ENCODE measurements at regions of chrX and their contacts with region 1.

Region 1: DNA sequence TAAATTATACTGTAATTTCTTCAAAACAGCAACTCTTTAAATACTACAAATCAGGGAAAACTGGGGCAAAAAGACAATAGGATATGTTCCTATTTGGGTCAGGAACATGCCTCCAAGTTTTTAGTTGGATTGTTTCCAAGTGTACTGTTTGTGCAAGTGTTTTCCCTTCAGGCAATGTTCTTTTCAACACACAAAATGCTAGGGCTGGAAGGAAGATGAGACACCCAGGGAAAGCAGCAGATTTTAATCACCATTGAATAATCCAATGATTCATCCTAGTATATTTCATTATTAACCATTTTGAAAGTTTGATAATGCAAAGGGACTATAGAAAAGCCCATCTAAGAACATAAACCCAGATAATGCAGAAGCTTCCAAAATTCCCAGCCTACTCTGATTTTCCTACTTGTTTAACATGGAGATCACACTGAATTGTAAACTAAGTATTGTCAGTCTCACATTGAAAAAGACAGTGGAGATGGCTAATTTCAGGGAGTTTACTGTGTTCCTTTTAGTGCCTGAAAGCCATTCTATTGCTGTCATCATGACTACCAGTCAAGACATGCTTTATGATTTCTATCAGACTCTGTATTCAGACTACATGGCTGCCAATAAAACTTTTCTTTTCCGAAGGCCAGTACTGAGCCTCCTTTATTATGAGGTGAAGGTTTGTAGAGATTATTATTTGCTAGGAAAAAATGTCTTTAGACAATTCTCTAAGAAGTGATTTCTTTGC is 38.6 kb downstream of the COL4A6 start:
- DNase-seq: no peak
- ATAC-seq: no peak
- H3K4me3 ChIP-seq: no peak overlapping the region
- H3K27ac ChIP-seq: no peak overlapping the region
- H3K4me1 ChIP-seq: peaks cover 0 to 10% (median 0%) of the 10 kb centered on the region in 12 donors
- H3K27me3 ChIP-seq: peaks cover 0 to 7% (median 0%) of the 10 kb centered on the region in 9 donors
- CTCF ChIP-seq: no peak
- POLR2A ChIP-seq: no peak

Region 2: GRCh38 chrX:108138814-108139702 is 260.5 kb before region 1 on chrX:
- intact Hi-C with region 1: no loop called
- DNase-seq: no peak
- ATAC-seq: peak in 2 of 4 donors; percentile 30 to 34
- H3K4me3 ChIP-seq: no peak overlapping the region
- H3K27ac ChIP-seq: no peak overlapping the region
- H3K4me1 ChIP-seq: no peaks in the 10 kb centered on the region
- H3K27me3 ChIP-seq: no peaks in the 10 kb centered on the region
- CTCF ChIP-seq: peak; percentile 24 to 56 (median 44)
- POLR2A ChIP-seq: no peak

Region 3: DNA sequence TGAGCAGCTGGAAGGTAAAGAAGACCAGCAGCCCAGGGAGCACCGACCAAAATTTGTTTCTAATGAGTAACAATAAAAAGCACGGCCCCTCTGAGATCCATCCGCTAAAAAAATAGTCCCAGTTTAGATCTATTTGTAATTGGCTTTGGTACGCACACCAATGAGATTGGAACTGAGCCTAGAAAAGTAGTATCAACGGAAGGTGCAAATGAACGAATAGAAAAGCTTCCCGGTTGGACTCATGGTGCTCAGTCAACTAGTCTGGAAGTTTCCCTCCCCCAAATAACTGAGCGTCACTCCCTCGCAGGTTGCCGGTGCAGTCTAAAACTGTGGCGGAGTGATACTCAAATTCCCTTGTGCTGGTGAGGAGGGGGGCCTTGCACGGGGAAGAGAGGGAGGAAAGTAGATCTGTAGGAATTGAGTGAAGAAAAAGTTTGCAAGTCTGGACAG is 39.9 kb after region 1 on chrX and contains the start of gene COL4A5:
- intact Hi-C with region 1: loop called in 1 of 10 experiments (anchors 5 kb)
- DNase-seq: peak in 4 of 5 donors; percentile 45 to 59 (median 54)
- ATAC-seq: peak; percentile 84 to 92 (median 90)
- H3K4me3 ChIP-seq: peak within 1 kb of the TSS; percentile 11 to 68 (median 54)
- H3K27ac ChIP-seq: peak within 1 kb of the TSS in 11 of 12 donors; percentile 0 to 82 (median 66)
- H3K4me1 ChIP-seq: no peaks in the 10 kb centered on the region
- H3K27me3 ChIP-seq: peaks cover 0 to 45% (median 0%) of the 10 kb centered on the region in 9 donors
- CTCF ChIP-seq: no peak
- POLR2A ChIP-seq: no peak
- total RNA-seq, gene COL4A5: 4.2 to 12.7 (median 7.7) TPM

Measured in heart left ventricle (tissue), 16 donors.